Heart left ventricle (tissue), 16 donors: ENCODE measurements at regions of chr17 and their contacts with region 1.

Region 1: GRCh38 chr17:62892870-62893338 is 73.1 kb upstream of the TANC2 start:
- DNase-seq: peak in 4 of 5 donors; percentile 31 to 54 (median 49)
- ATAC-seq: peak; percentile 55 to 95 (median 86)
- H3K4me3 ChIP-seq: no peak overlapping the region
- H3K27ac ChIP-seq: peak overlapping the region in 6 of 12 donors; percentile 18 to 51 (median 39)
- H3K4me1 ChIP-seq: peaks cover 0 to 34% (median 13%) of the 10 kb centered on the region in 12 donors
- H3K27me3 ChIP-seq: no peaks in the 10 kb centered on the region
- CTCF ChIP-seq: no peak
- POLR2A ChIP-seq: no peak

Region 2: DNA sequence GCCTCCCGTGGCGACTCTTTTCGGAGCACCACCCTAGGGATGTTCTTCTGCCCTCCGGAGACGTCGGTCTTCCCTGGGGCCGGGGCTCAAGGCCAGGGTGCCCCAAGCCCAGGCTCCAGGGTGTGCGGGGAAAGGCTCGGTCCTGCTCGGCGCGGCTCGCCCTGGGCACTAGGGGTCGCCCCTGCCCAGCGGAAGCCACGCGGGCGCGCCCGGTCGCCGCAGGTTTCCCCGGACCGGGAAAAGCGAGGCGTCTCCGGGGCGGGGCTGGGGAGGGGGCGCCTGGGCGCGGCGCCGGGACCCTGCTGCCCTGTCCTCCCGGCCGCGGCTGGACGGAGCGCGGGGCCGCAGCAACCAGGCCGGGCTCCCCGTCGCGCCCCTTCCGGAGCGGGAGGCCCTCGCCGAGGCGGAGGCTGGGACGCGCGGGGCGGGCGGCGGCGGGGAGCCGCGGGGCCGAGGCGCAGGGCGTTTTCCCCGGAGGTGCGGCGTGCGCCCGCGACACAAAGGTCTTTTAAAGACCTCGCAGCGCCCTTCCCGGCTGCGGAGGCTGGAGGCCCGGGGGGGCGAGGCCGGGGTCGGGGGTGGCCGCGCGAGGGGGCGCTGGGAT is 189.0 kb before region 1 on chr17:
- intact Hi-C with region 1: loop called in 1 of 10 experiments (anchors 10 kb)
- DNase-seq: peak; percentile 77 to 91 (median 79)
- ATAC-seq: peak; percentile 83 to 95 (median 88)
- H3K4me3 ChIP-seq: peak overlapping the region; percentile 57 to 91 (median 74)
- H3K27ac ChIP-seq: peak overlapping the region; percentile 70 to 93 (median 78)
- H3K4me1 ChIP-seq: peaks cover 0 to 36% (median 23%) of the 10 kb centered on the region in 12 donors
- H3K27me3 ChIP-seq: peaks cover 0 to 13% (median 0%) of the 10 kb centered on the region in 9 donors
- CTCF ChIP-seq: peak; percentile 69 to 93 (median 86)
- POLR2A ChIP-seq: no peak